ENCODE measurements at regions of chr7 and their contacts with region 1.

Region 1: GRCh38 chr7:80392229-80393169 is 119.4 kb downstream of the GNAT3 start:
- DNase-seq: peak in 1 of 2 experiments; percentile 48
- H3K4me3 ChIP-seq: no peak overlapping the region
- H3K27ac ChIP-seq: no peak overlapping the region
- H3K4me1 ChIP-seq: no peaks in the 10 kb centered on the region
- H3K27me3 ChIP-seq: no peaks in the 10 kb centered on the region
- CTCF ChIP-seq: peak; percentile 75

Region 2: DNA sequence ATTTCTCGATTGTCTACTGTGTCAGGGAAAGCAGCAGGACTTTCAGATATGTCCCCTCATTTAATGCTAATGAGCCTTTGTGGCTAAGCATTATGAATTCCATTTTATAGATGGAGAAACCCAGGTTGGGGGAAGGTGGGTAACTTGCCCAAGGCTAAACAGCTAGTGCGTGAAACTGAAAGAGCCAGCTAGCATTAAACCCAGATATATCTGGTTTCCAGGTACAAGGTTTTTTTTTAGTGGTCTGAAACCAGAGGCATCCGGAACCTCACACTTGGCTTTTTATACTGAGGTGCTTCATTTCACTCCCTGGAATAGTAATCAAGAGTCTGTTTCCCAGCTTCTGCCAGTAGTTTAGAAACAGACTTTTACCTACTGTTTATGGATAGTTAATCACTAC is 1899.1 kb before region 1 on chr7:
- CTCF ChIA-PET with region 1: interaction called, 11 read pairs
- POLR2A ChIA-PET with region 1: no interaction called
- intact Hi-C with region 1: no loop called
- DNase-seq: no peak
- H3K4me3 ChIP-seq: no peak overlapping the region
- H3K27ac ChIP-seq: no peak overlapping the region
- H3K4me1 ChIP-seq: no peaks in the 10 kb centered on the region
- H3K27me3 ChIP-seq: no peaks in the 10 kb centered on the region
- CTCF ChIP-seq: no peak

Region 3: GRCh38 chr7:80095545-80095944 is 297.0 kb before region 1 on chr7:
- CTCF ChIA-PET with region 1: no interaction called
- POLR2A ChIA-PET with region 1: no interaction called
- intact Hi-C with region 1: loop called (anchors 10 kb)
- DNase-seq: no peak
- H3K4me3 ChIP-seq: no peak overlapping the region
- H3K27ac ChIP-seq: no peak overlapping the region
- H3K4me1 ChIP-seq: peaks cover 8% of the 10 kb centered on the region
- H3K27me3 ChIP-seq: no peaks in the 10 kb centered on the region
- CTCF ChIP-seq: peak; percentile 66

Region 4: GRCh38 chr7:80359029-80359428 is 33.5 kb before region 1 on chr7:
- CTCF ChIA-PET with region 1: no interaction called
- POLR2A ChIA-PET with region 1: interaction called, 14 read pairs
- intact Hi-C with region 1: no loop called
- DNase-seq: no peak
- H3K4me3 ChIP-seq: no peak overlapping the region
- H3K27ac ChIP-seq: no peak overlapping the region
- H3K4me1 ChIP-seq: peaks cover 12% of the 10 kb centered on the region
- H3K27me3 ChIP-seq: no peaks in the 10 kb centered on the region
- CTCF ChIP-seq: no peak

Region 5: DNA sequence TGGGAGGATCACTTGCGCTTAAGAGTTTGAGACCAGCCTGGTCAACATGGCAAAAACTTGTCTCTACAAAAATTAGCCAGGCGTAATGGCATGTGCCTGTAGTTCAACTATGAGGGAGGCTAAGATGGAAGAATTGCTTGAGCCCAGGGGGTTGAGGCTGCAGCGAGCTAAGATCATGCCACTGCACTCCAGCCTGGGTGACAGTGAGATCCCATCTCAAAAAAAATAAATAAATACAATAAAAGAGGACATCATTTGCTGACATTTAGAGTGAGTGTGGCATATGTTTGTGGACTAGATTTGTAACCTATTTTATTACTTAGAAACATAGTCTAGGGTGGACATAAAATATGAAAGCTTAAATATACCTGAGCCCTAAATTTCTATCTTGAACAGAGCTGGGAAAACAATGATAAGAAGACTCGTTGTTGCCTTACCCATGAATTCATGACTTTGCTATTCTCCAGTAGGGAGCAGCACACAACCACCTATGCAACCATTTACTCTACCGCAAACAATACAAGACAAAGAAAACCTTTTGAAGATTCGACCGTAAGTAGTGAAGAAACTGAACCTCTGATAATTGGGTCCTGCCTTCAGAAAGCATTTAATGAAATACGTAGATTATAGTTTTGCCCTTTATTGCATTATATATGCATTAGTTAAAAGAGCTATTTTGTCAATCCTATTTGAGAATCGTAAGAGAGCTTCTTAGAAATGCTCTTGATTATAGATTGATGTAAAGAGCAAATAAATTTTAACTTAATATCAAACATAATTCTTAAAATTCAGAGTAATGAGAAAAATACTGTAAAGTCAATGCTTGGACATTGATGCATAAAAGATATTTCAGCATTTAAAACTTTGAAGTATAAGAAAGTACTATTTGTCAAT is 35.9 kb after region 1 on chr7:
- CTCF ChIA-PET with region 1: no interaction called
- POLR2A ChIA-PET with region 1: no interaction called
- intact Hi-C with region 1: no loop called
- DNase-seq: peak; percentile 35 to 50
- H3K4me3 ChIP-seq: no peak overlapping the region
- H3K27ac ChIP-seq: no peak overlapping the region
- H3K4me1 ChIP-seq: no peaks in the 10 kb centered on the region
- H3K27me3 ChIP-seq: no peaks in the 10 kb centered on the region
- CTCF ChIP-seq: peak; percentile 75

Region 6: DNA sequence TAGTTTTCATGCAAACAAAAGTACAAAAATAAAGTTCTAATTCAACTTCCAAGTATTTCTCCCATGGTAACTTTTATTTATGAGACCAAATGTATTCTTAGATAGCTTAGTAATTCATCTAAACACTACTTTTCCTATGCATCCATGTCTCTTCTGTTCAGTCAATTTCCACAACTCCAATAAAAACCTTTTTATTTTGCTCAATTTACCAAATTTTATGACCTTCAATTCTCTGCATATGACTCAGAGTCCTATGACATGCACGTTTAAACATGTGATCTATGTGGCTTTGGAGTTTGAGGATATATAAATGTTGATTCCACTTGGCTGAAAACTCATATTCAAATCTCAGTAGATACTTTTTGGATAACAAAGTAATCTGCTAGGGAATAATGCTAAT is 159.8 kb after region 1 on chr7:
- CTCF ChIA-PET with region 1: no interaction called
- POLR2A ChIA-PET with region 1: no interaction called
- intact Hi-C with region 1: no loop called
- DNase-seq: no peak
- H3K4me3 ChIP-seq: no peak overlapping the region
- H3K27ac ChIP-seq: no peak overlapping the region
- H3K4me1 ChIP-seq: peaks cover 18% of the 10 kb centered on the region
- H3K27me3 ChIP-seq: no peaks in the 10 kb centered on the region
- CTCF ChIP-seq: no peak